MCF 10A (cell line): ENCODE measurements at regions of chr17 and their contacts with region 1.

Region 1: GRCh38 chr17:8222630-8223356 is 12.4 kb upstream of the AURKB start:
- DNase-seq: peak; percentile 94
- H3K4me3 Mint-ChIP-seq: peak overlapping the region; percentile 93
- H3K27ac Mint-ChIP-seq: peak overlapping the region; percentile 97
- H3K4me1 Mint-ChIP-seq: peaks cover 18% of the 10 kb centered on the region
- H3K27me3 Mint-ChIP-seq: no peaks in the 10 kb centered on the region
- CTCF ChIP-seq: no peak

Region 2: GRCh38 chr17:8156246-8156992 is 66.4 kb before region 1 on chr17:
- CTCF ChIA-PET with region 1: interaction called, 5 read pairs
- POLR2A ChIA-PET with region 1: interaction called, 181 read pairs
- intact Hi-C with region 1: no loop called
- DNase-seq: peak; percentile 100
- H3K4me3 Mint-ChIP-seq: no peak overlapping the region
- H3K27ac Mint-ChIP-seq: no peak overlapping the region
- H3K4me1 Mint-ChIP-seq: peaks cover 38% of the 10 kb centered on the region
- H3K27me3 Mint-ChIP-seq: no peaks in the 10 kb centered on the region
- CTCF ChIP-seq: no peak

Region 3: GRCh38 chr17:8189711-8190477 is 32.9 kb before region 1 on chr17 and contains the start of gene BORCS6:
- CTCF ChIA-PET with region 1: interaction called, 42 read pairs
- POLR2A ChIA-PET with region 1: interaction called, 352 read pairs
- intact Hi-C with region 1: loop called (anchors 1 kb)
- DNase-seq: peak; percentile 99
- H3K4me3 Mint-ChIP-seq: no peak within 1 kb of the TSS
- H3K27ac Mint-ChIP-seq: peak within 1 kb of the TSS; percentile 59
- H3K4me1 Mint-ChIP-seq: no peaks in the 10 kb centered on the region
- H3K27me3 Mint-ChIP-seq: no peaks in the 10 kb centered on the region
- CTCF ChIP-seq: no peak
- total RNA-seq, gene BORCS6: 3.9 and 4.4 TPM in 2 replicates

Region 4: DNA sequence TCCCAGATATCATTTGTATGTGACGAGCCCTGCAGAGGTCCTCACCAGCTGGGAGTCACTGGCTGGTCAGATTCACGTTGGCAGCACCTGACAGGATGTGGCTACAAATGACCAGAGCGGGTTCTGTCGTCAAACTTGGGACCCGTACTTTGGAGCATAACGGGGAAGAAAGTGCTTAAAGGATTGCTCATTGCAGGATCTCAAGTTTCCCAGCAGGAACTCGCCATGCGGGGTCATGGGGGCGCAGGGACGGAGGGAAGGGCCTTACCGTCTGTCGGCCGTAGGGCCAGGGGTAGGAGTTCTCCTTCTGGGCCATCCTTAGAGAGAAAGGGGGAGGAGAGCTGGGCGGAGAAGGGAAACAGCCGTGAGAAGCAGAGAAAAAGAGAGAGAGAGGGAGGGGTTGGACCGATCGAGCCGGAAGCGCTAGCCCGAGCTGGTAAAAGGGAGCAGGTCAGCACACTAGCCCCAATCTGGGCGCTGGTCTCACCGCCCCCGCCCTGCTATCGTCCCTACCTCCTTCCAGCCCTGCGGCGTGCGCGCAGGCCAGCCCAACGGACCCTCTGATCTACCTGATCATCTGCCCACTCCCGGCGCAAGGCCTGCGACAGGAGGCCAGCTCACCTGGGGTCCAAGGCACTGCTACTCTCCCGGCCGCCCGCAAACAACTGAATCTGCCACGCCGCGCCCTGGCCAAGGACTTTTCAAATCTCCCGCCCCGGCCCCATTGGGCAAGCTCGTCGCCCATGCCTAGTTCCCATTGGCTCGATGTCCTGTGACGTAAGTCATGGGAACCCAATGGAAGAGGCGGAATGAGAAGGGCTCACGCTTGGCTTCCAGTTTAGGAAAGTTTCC is 12.7 kb before region 1 on chr17 and contains the start of gene AURKB:
- CTCF ChIA-PET with region 1: interaction called, 6 read pairs
- POLR2A ChIA-PET with region 1: interaction called, 72 read pairs
- intact Hi-C with region 1: no loop called
- DNase-seq: peak; percentile 99
- H3K4me3 Mint-ChIP-seq: peak within 1 kb of the TSS; percentile 91
- H3K27ac Mint-ChIP-seq: peak within 1 kb of the TSS; percentile 91
- H3K4me1 Mint-ChIP-seq: peaks cover 6% of the 10 kb centered on the region
- H3K27me3 Mint-ChIP-seq: no peaks in the 10 kb centered on the region
- CTCF ChIP-seq: no peak
- total RNA-seq, gene AURKB: 11.7 and 33.6 TPM in 2 replicates

Region 5: DNA sequence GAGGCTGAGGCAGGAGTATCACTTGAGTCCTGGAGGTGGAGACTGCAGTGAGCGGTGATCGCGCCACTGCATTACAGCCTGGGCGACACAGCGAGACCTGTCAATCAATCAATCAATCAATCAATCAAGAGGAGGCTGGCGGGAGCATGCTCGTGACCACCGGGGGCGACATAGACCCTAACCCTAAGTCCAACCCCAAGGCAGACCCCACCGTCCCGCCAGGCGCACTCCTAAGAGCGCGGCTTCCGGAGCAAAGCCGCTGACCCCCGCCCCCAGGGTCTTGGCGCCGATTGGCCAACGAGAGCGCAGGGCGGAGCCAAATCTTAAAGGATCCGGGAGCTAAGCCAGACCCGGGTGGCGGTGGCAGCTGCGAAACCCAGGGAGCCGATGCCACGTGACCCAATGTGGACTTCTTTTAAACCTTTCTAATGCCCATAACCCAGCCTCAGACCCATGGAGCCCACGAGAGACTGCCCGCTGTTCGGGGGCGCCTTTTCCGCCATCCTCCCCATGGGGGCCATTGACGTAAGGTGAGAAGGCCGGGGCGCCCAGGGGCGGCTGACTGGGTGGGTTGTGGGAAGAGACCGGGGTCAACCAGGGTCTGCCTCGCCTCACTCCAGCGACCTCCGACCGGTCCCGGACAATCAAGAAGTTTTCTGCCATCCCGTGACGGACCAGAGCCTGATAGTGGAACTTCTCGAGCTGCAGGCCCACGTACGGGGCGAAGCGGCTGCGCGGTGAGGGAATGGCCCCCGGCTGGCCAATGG is 65.7 kb after region 1 on chr17 and contains the start of gene RANGRF:
- CTCF ChIA-PET with region 1: no interaction called
- POLR2A ChIA-PET with region 1: interaction called, 10 read pairs
- intact Hi-C with region 1: no loop called
- DNase-seq: peak; percentile 85
- H3K4me3 Mint-ChIP-seq: peak within 1 kb of the TSS; percentile 90
- H3K27ac Mint-ChIP-seq: peak within 1 kb of the TSS; percentile 88
- H3K4me1 Mint-ChIP-seq: peaks cover 10% of the 10 kb centered on the region
- H3K27me3 Mint-ChIP-seq: no peaks in the 10 kb centered on the region
- CTCF ChIP-seq: no peak
- total RNA-seq, gene RANGRF: 38.6 and 41.8 TPM in 2 replicates

Region 6: DNA sequence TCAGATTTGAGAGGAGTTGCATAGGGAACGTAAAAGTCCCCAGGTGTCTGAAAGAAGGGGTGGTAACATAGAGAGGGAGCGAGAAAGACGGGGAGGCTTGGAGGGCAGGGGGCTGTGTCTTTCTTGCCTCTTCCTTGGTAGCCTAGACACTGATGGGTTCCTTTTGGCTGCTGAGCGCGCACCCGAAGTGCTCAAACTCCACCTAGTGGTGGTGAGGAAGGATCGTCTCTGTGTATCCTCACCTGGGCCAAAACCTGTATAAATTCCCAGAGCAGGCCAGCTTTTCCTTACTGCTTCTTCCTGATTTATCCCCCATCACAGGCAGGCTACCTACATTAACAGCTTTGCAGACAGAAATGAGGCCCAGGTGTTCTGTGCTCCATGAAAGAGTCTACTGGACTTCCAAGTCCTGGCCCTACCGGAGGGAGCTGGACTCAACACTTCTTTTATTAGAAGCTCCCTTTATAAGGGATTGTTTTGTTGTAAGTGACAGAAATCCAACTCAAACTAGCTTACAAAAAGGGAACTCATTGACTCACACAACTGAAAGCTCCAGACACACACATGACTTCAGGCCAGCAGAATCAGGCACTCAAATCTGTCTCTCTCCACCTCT is 77.9 kb after region 1 on chr17:
- CTCF ChIA-PET with region 1: interaction called, 8 read pairs
- POLR2A ChIA-PET with region 1: interaction called, 24 read pairs
- intact Hi-C with region 1: loop called (anchors 1 kb)
- DNase-seq: peak; percentile 77
- H3K4me3 Mint-ChIP-seq: no peak overlapping the region
- H3K27ac Mint-ChIP-seq: no peak overlapping the region
- H3K4me1 Mint-ChIP-seq: peaks cover 13% of the 10 kb centered on the region
- H3K27me3 Mint-ChIP-seq: no peaks in the 10 kb centered on the region
- CTCF ChIP-seq: peak; percentile 72